Activated T-helper 1 cell treated with anti-CD3 and anti-CD28 coated beads, Interleukin-12 subunit alpha, Interleukin-12 subunit beta, Interleukin-2, Interleukin-4 antibody, amounts not matched to agents 30 ng/mL and 10 ng/mL and 1 ng/mL, durations not matched to agents 14 hours and 24 hours and 36 hours (primary cell): ENCODE measurements at regions of chr3 and their contacts with region 1.

Region 1: DNA sequence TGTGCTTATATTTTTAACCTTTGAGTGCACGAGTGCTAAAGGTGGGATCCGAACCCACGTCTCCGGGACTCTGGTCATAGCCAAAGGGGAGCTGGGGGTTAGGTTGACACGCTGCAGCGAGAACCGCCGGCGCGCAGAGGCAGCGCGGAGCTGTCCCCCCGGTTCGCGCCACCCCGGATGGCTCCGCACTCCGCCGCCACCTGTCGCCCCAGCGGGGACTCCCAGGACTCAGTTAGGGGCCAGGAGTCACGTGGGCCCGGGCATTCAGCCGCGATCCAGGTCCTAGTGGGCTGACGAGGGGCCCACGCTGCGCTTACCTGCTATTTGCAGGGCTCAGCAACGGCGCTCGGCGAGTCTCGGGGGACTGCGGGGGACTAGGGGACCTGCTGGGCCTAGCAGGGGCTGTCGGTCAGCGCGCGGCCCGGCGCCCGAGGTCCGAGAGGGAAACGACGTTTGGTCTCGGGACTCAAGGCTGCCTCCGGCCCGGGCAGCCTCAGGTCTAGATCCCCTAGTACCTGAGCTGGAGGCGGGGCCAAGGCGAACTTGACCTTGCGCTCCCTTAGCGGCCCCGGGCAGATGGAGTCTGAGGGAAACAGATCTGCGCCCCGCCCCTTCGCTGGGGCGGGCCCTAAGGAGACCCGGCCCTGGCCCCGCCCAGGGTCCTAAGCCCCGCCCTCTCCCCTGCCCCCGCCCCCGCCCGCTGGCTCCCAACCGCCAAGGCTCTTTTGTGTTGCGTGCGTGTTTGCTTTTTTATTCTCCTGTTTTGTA is at the start of gene NMNAT3:
- DNase-seq: peak; percentile 73
- H3K4me3 Mint-ChIP-seq: peak within 1 kb of the TSS; percentile 83
- H3K27ac Mint-ChIP-seq: no peak within 1 kb of the TSS
- H3K4me1 Mint-ChIP-seq: no peaks in the 10 kb centered on the region
- H3K27me3 Mint-ChIP-seq: peaks cover 13% of the 10 kb centered on the region
- total RNA-seq, gene NMNAT3: 1.1 and 1.2 TPM in 2 replicates

Region 2: GRCh38 chr3:139538733-139539132 is 138.8 kb before region 1 on chr3:
- intact Hi-C with region 1: no loop called
- DNase-seq: no peak
- H3K4me3 Mint-ChIP-seq: no peak overlapping the region
- H3K27ac Mint-ChIP-seq: no peak overlapping the region
- H3K4me1 Mint-ChIP-seq: peaks cover 20% of the 10 kb centered on the region
- H3K27me3 Mint-ChIP-seq: peaks cover 39% of the 10 kb centered on the region

Region 3: DNA sequence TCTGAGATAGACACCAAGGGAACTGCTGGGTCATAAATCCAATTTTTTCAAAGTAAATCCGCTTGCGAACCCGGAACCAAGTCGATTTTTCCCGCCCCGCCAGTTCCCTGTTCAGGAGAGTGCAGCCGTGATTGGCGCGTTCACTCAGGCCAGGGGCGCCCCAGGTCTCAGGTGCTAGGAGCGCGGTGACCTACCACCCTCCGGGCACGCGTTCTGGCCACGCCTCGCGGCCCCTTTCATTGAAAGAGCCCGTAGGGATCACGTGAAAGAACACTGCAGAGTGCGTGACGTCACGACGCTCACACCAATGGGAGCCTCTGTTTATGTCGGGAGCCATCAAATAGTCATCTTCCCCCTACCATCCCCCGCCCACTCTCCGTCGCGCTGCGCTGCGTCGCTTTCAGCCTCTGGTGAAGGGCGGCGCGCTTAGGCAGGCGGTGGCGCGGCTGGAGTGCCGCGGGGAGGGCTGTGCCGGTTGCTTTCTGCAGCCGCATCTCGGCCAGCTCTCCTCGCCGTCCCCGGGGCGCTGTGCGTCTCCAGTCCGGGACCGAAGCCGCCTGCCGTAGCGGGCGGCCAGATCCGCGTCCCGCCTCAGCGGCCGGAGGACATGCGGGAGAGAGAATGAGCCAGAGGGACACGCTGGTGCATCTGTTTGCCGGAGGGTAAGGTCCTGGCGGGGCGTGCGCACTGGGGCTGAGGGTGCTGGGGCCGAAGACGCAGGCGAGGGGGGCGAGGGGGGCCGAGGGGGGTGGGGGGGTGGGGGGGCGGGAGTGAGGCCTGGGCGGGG is 1264.1 kb after region 1 on chr3 and contains the start of gene SLC25A36:
- intact Hi-C with region 1: loop called (anchors 5 kb)
- DNase-seq: peak; percentile 95
- H3K4me3 Mint-ChIP-seq: peak within 1 kb of the TSS; percentile 92
- H3K27ac Mint-ChIP-seq: peak within 1 kb of the TSS; percentile 95
- H3K4me1 Mint-ChIP-seq: peaks cover 36% of the 10 kb centered on the region
- H3K27me3 Mint-ChIP-seq: peaks cover 12% of the 10 kb centered on the region
- total RNA-seq, gene SLC25A36: 49.5 and 52.3 TPM in 2 replicates